Activated CD4-positive, alpha-beta T cell treated with anti-CD3 and anti-CD28 coated beads, Interleukin-2, amount 10 ng/mL, durations not matched to agents 24 days and 14 days (primary cell): ENCODE measurements at regions of chr1 and their contacts with region 1.

Region 1: GRCh38 chr1:47710329-47711071 is 272.7 kb downstream of the FOXD2 start:
- DNase-seq: peak; percentile 92
- H3K4me3 Mint-ChIP-seq: no peak overlapping the region
- H3K27ac Mint-ChIP-seq: no peak overlapping the region
- H3K4me1 Mint-ChIP-seq: peaks cover 2% of the 10 kb centered on the region
- H3K27me3 Mint-ChIP-seq: peaks cover 67% of the 10 kb centered on the region

Region 2: DNA sequence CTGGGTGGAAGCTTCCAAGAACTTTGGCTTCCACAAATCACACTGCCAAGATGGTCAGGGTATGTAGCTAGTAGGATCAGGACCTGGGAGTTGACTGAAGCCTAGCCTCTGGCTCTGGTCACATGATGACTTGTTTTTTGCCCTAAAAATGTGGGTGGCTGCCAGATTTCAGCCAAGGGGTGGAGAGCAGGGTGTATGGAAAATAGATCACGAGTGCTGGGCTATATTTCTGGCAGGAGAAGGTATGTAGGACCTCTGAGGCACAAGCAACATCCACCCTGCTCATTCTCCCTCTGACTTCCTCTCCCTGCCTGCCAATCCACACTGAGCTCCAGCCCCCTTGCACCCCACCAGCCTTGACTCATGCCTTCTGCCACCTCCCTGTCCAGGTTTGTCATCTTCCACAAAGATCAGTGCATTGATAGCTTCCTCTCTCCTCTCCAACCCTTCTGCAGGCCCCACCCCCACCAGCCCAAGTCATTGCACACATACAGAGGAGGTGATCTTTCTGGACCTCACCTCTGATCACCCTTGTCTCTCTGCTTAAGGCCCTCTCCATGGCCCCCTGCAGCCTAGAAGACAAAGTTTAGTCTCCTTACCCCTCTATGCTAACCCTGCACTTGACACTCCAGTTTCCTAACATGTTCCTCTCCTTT is 919.9 kb before region 1 on chr1:
- intact Hi-C with region 1: no loop called
- DNase-seq: no peak
- H3K4me3 Mint-ChIP-seq: no peak overlapping the region
- H3K27ac Mint-ChIP-seq: no peak overlapping the region
- H3K4me1 Mint-ChIP-seq: no peaks in the 10 kb centered on the region
- H3K27me3 Mint-ChIP-seq: peaks cover 17% of the 10 kb centered on the region

Region 3: GRCh38 chr1:47225430-47226100 is 484.9 kb before region 1 on chr1:
- intact Hi-C with region 1: loop called (anchors 5 kb)
- DNase-seq: no peak
- H3K4me3 Mint-ChIP-seq: peak overlapping the region; percentile 51
- H3K27ac Mint-ChIP-seq: peak overlapping the region; percentile 25
- H3K4me1 Mint-ChIP-seq: peaks cover 14% of the 10 kb centered on the region
- H3K27me3 Mint-ChIP-seq: peaks cover 54% of the 10 kb centered on the region

Region 4: DNA sequence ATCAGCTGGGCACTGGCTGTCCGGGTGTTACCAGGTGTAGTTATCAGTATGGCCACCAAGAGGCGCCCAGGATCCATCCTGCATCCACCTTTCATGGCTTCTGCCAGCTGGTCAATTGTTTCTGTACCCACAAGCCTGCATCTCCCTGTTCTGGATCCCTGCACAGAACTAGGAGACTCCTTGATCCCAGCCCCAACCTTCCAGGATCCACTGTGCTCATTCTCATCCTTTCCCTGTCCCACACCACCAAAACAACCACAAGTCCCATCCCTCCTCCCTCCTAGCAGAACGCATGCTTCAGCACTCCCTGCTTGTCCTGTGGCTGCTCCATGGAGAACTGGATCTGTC is 321.6 kb before region 1 on chr1:
- intact Hi-C with region 1: loop called (anchors 1 kb)
- DNase-seq: peak; percentile 82
- H3K4me3 Mint-ChIP-seq: no peak overlapping the region
- H3K27ac Mint-ChIP-seq: no peak overlapping the region
- H3K4me1 Mint-ChIP-seq: no peaks in the 10 kb centered on the region
- H3K27me3 Mint-ChIP-seq: peaks cover 10% of the 10 kb centered on the region

Region 5: DNA sequence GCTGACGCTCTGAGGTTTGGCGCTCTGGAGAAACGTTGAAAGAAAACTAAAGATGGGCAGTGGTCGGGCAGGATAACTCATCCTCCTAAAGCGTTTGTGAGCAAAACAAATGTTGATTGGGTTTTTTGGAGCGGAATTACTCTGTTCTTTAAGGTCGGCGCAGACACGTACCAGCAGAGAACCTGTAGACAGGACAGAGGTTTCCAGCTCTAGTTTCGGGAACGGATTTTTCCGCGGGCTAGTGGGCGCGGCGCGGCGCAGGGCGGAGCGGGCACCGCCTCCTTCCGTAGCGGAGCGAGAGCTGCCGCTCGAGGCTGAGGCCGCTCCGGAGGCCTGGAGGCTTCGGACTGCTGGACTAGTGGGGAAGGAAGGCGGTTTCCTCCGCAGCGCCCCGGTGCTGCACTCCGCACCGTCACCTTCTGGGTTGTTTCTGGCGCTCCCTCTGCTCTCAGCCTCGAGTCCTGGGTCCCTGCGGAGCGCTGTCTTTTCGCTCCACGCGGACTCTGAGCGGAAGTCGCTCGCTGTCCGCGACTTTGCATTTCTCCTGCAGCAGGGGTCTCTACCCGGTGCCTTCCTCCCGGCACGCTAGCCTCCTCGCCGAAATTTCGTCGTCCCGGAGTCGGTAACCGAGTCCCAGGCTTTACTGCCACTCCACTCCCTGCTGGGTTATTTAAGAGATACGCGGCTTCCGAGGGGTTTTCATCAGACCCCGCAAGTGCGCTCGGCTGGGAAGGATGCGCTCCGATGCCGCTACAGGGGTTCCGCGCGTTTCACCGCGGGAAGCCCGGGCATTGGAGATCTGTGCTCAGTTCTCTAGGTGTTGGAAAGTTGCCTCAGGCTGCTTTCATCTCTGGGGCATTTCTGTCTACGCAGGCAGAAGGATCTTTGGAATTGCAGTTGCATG is 265.7 kb before region 1 on chr1:
- intact Hi-C with region 1: loop called (anchors 2 kb)
- DNase-seq: peak; percentile 77
- H3K4me3 Mint-ChIP-seq: peak overlapping the region; percentile 74
- H3K27ac Mint-ChIP-seq: peak overlapping the region; percentile 65
- H3K4me1 Mint-ChIP-seq: peaks cover 16% of the 10 kb centered on the region
- H3K27me3 Mint-ChIP-seq: peaks cover 48% of the 10 kb centered on the region

Region 6: GRCh38 chr1:47755101-47755990 is 44.8 kb after region 1 on chr1:
- intact Hi-C with region 1: no loop called
- DNase-seq: peak; percentile 86
- H3K4me3 Mint-ChIP-seq: no peak overlapping the region
- H3K27ac Mint-ChIP-seq: no peak overlapping the region
- H3K4me1 Mint-ChIP-seq: no peaks in the 10 kb centered on the region
- H3K27me3 Mint-ChIP-seq: no peaks in the 10 kb centered on the region